ENCODE measurements at regions of chr17 and their contacts with region 1.

Region 1: GRCh38 chr17:76182016-76182764 is 41.1 kb upstream of the FOXJ1 start:
- DNase-seq: peak; percentile 94
- H3K4me3 ChIP-seq: no peak overlapping the region
- H3K27ac ChIP-seq: no peak overlapping the region
- H3K4me1 ChIP-seq: no peaks in the 10 kb centered on the region
- H3K27me3 ChIP-seq: no peaks in the 10 kb centered on the region
- CTCF ChIP-seq: peak; percentile 81

Region 2: DNA sequence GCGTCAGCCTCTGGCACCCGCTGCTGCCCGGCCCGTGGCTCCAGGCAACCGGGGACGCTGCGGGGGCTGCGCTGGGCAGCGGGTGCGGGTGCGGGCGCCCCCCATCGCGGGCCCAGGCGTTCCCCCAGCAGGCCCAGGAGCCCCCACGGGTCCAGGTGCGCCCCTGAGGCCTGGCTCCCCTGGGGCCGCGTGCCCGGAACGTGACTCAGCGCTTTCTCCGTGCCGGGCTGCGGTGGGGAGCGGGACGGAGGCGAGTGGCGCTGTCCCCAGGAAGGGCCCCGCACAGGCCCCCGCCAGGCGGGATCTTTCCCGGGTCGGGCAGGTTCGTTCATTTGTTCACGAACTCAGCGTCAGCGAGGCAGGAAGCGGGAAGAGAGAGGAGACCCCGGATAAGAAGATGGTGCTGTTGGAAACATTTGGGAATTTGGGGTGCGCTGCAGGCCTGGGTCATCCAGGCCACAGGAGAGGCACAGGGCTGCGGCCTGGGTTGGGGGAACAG is 60.2 kb before region 1 on chr17:
- intact Hi-C with region 1: loop called (anchors 5 kb)
- DNase-seq: peak; percentile 19
- H3K4me3 ChIP-seq: peak overlapping the region; percentile 35
- H3K27ac ChIP-seq: no peak overlapping the region
- H3K4me1 ChIP-seq: no peaks in the 10 kb centered on the region
- H3K27me3 ChIP-seq: no peaks in the 10 kb centered on the region
- CTCF ChIP-seq: no peak

Region 3: DNA sequence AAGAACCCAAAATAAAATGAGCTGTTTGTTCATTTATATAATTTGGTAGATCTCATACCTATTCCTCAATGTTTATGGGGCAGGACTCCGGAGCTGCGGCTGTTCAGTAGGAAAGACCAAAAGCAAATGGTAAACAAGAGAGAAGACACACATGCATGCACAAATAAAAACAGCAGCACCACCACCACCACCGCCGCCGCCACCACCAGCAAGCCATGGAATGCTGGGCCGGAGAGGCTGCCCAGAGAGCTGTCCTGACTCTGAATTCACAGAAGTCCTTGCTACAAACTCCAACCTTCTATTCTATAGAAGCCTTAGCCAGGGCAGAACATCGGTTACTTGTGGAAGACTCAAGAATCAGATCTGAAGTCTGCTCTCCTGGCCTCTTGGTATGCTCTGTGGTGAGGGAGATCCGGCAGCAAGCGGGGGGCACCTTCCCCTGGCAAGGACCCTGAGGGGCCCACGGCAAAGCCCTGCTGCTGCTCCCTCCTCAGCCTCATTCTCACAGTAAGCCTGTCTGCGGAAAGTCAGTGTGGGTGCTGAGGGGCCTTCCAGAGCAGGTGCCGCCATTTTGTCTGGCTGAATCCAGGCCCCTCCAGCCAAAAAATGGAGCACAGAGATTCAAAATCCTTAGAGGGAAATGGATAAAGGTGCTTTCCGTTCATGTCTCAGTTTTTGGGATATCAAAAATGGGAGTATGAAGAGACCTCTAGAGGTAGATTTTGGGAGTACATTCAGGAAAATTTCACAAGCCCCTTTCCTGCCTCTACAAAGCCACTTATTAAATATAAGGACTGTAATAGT is 34.8 kb before region 1 on chr17:
- intact Hi-C with region 1: loop called (anchors 5 kb)
- DNase-seq: no peak
- H3K4me3 ChIP-seq: no peak overlapping the region
- H3K27ac ChIP-seq: no peak overlapping the region
- H3K4me1 ChIP-seq: no peaks in the 10 kb centered on the region
- H3K27me3 ChIP-seq: no peaks in the 10 kb centered on the region
- CTCF ChIP-seq: peak; percentile 38

Region 4: DNA sequence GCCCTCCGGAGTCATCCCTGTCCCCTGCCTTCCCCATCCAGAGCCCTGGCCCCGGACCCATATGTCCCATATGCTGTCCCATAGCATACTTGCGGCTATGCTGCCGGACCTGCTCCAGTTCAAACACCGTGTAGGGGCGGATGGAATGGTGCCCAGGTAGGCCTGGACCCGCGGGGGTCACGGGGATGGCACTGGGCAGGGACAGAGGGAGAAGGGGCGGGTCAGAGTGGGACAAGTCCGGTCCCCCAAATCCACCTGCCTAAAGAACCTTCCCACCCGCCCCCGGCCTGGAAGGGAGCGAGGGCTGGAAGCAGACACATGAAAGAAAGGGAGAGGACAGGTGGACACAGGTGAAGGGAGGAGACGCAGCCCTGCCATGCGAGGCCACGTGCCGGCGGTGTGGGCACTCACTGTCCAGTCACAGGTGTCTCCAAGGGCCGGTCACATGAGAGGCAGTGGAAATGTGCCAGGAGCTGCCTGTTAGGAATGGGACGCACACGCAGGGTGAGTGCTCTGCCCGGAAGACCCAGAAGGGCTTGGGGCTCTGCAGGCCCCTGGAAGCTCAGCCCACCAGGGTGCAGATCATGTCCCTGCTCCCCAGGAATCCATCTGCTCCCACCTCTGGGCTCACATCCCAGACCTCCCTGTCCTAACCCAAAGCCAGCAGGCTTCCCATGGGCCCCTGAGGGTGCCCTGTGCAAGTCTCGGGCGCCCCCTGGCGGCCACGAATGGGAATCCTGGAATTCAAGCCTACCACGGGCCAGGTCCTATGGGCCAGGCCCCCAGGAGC is 97.0 kb after region 1 on chr17:
- intact Hi-C with region 1: loop called (anchors 10 kb)
- DNase-seq: peak; percentile 92
- H3K4me3 ChIP-seq: no peak overlapping the region
- H3K27ac ChIP-seq: no peak overlapping the region
- H3K4me1 ChIP-seq: no peaks in the 10 kb centered on the region
- H3K27me3 ChIP-seq: no peaks in the 10 kb centered on the region
- CTCF ChIP-seq: peak; percentile 97

Measured in colonic mucosa (tissue), 4 donors.